HepG2 (cell line): ENCODE measurements at regions of chr18 and their contacts with region 1.

Region 1: GRCh38 chr18:77650799-77651385 is 401.2 kb downstream of the GALR1 start:
- DNase-seq: peak; percentile 24
- ATAC-seq: peak; percentile 96
- H3K4me3 ChIP-seq: no peak overlapping the region
- H3K27ac ChIP-seq: no peak overlapping the region
- H3K4me1 ChIP-seq: no peaks in the 10 kb centered on the region
- H3K27me3 ChIP-seq: peaks cover 0 to 13% of the 10 kb centered on the region in 2 experiments; a peak in 2 of 5 replicates
- CTCF ChIP-seq: peak; percentile 90
- EP300 ChIP-seq: no peak
- POLR2A ChIP-seq: no peak
- RAD21 ChIP-seq: peak; percentile 73

Region 2: DNA sequence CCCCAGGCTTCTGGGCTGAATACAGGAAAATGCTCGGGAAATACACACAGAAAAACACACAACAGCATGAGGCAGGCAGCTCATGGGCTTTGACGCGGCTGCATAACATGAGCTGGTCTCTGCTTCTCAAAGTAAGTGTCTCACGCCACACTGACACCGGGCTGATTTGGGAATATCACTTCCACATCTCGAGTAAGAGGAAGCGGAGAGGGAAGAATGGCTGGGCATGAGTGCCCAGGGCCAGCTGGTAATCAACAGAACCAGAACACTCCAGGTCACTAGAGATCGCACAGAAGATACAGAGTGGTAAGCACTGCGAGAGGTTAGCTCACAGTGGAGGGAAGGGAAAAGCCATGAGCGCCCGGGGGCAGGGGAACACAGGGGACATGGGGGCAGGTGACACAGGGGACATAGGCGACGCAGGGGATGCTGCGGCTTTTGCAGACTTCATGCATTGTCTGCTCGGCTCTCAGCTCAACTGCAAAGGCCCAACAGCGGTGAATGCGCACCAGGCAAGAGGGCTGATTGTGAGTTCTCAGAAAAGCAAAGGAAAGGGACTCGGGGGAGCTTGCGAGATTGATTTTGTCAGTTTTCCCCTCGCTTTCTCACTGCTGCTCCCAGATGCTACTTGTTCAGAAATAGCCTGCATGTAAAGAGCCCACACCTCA is 659.7 kb before region 1 on chr18:
- CTCF ChIA-PET with region 1: no interaction called
- POLR2A ChIA-PET with region 1: no interaction called
- in situ Hi-C with region 1: loop called (anchors 10 kb)
- intact Hi-C with region 1: no loop called
- DNase-seq: no peak
- ATAC-seq: no peak
- H3K4me3 ChIP-seq: no peak overlapping the region
- H3K27ac ChIP-seq: no peak overlapping the region
- H3K4me1 ChIP-seq: peaks cover 32% of the 10 kb centered on the region
- H3K27me3 ChIP-seq: no peaks in the 10 kb centered on the region; a peak in 1 of 5 replicates
- CTCF ChIP-seq: no peak
- EP300 ChIP-seq: no peak
- POLR2A ChIP-seq: no peak
- RAD21 ChIP-seq: no peak